Transverse colon (tissue), 4 donors: ENCODE measurements at regions of chr11 and their contacts with region 1.

Region 1: GRCh38 chr11:83019888-83020579 is 51.7 kb downstream of the RAB30 start:
- DNase-seq: peak; percentile 75
- H3K4me3 ChIP-seq: no peak overlapping the region
- H3K27ac ChIP-seq: peak overlapping the region in 1 of 4 donors; percentile 18
- H3K4me1 ChIP-seq: peaks cover 9 to 21% (median 14%) of the 10 kb centered on the region in 4 donors
- H3K27me3 ChIP-seq: no peaks in the 10 kb centered on the region
- CTCF ChIP-seq: no peak
- EP300 ChIP-seq: no peak
- POLR2A ChIP-seq: no peak

Region 2: DNA sequence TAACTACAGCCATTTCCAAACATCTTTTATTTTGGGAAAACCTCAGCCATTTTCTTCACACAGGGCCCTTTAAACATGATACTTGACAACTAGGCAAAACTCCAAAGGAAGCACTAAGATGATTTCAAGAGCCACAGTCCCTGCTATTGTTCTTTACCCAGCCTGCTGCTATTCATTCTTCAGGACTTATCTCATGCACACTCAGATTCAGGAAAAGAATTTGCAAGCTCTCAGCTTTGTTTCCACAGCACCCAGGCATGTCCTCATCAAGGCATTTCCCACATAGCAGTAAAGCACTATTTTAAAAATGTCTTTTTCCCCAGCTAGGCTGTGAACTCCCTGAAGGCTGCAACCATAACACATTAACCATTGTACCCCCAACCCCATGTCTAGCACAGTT is 875.5 kb after region 1 on chr11:
- in situ Hi-C with region 1: no loop called
- intact Hi-C with region 1: loop called (anchors 5 kb)
- DNase-seq: no peak
- H3K4me3 ChIP-seq: no peak overlapping the region
- H3K27ac ChIP-seq: no peak overlapping the region
- H3K4me1 ChIP-seq: no peaks in the 10 kb centered on the region
- H3K27me3 ChIP-seq: no peaks in the 10 kb centered on the region
- CTCF ChIP-seq: no peak
- EP300 ChIP-seq: no peak
- POLR2A ChIP-seq: no peak